Mucosa of descending colon (tissue), 3 donors: ENCODE measurements at regions of chr2 and their contacts with region 1.

Region 1: DNA sequence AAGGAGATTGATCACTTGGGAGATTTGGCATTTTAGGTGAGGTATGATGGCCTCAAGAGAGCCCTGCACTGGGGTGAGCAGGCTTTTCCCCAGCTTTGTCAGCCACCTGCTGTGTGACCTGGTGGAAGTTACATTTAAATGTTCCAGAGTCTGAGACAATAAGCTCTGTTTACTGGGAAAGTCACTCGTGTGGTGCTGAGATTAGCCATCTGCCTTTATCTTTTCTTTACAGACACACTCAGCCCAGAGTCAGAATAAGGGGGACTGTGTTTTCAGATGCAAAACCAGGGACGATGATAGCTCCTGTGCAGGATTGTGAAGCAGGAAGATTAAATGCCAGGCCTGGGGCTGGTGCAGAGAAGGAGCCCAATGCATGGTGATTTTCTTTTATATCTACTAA is 47.9 kb downstream of the SH3RF3 start:
- DNase-seq: no peak
- ATAC-seq: no peak
- H3K4me3 ChIP-seq: no peak overlapping the region
- H3K4me1 ChIP-seq: no peaks in the 10 kb centered on the region
- CTCF ChIP-seq: no peak

Region 2: GRCh38 chr2:108719149-108720044 is 457.5 kb before region 1 on chr2 and contains the start of gene RANBP2:
- intact Hi-C with region 1: no loop called
- DNase-seq: peak; percentile 95 to 98 (median 96)
- ATAC-seq: peak; percentile 100
- H3K4me3 ChIP-seq: peak within 1 kb of the TSS; percentile 88
- H3K4me1 ChIP-seq: peaks cover 12% of the 10 kb centered on the region
- CTCF ChIP-seq: no peak
- total RNA-seq, gene RANBP2: 48.3 to 81.0 (median 51.9) TPM

Region 3: GRCh38 chr2:109226128-109226527 is 49.2 kb after region 1 on chr2:
- intact Hi-C with region 1: loop called in 1 of 2 experiments (anchors 2 kb)
- DNase-seq: no peak
- ATAC-seq: no peak
- H3K4me3 ChIP-seq: no peak overlapping the region
- H3K4me1 ChIP-seq: no peaks in the 10 kb centered on the region
- CTCF ChIP-seq: no peak